Ovary (tissue), 10 donors: ENCODE measurements at regions of chr4 and their contacts with region 1.

Region 1: GRCh38 chr4:73069338-73070073 is at the start of gene COX18:
- DNase-seq: peak; percentile 97 to 99 (median 98)
- H3K4me3 ChIP-seq: peak within 1 kb of the TSS; percentile 59
- H3K27ac ChIP-seq: peak within 1 kb of the TSS; percentile 84 to 94
- H3K4me1 ChIP-seq: peaks cover 2% of the 10 kb centered on the region
- H3K27me3 ChIP-seq: no peaks in the 10 kb centered on the region
- CTCF ChIP-seq: no peak
- EP300 ChIP-seq: no peak
- POLR2A ChIP-seq: peak; percentile 83
- total RNA-seq, gene COX18: 9.9 to 18.2 (median 12.5) TPM

Region 2: DNA sequence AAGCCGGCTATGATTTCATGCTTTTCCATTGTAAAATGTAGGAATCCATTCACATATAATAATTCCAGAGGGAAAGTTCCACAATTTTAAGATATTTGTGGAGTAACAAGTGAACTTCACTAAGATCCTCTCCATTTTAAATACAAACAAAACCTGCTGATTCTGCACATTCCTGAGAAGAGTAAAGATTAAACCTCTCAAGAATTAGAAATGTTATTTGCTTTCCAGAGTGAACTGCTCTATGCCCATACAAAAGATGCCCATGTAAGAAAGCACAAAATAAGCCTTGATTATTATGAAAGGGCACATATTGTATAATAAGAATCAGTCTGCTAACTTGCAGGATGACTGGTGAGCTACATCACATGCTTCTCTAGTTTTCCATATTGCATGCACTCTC is 241.5 kb before region 1 on chr4:
- intact Hi-C with region 1: no loop called
- DNase-seq: no peak
- H3K4me3 ChIP-seq: no peak overlapping the region
- H3K27ac ChIP-seq: no peak overlapping the region
- H3K4me1 ChIP-seq: no peaks in the 10 kb centered on the region
- H3K27me3 ChIP-seq: no peaks in the 10 kb centered on the region
- CTCF ChIP-seq: no peak
- EP300 ChIP-seq: no peak
- POLR2A ChIP-seq: no peak

Region 3: GRCh38 chr4:73258686-73259570 is 189.4 kb after region 1 on chr4 and contains the start of gene ANKRD17:
- intact Hi-C with region 1: loop called in 3 of 4 experiments (anchors 2 to 10 kb)
- DNase-seq: peak; percentile 91 to 96 (median 94)
- H3K4me3 ChIP-seq: peak within 1 kb of the TSS; percentile 66
- H3K27ac ChIP-seq: peak within 1 kb of the TSS; percentile 90 to 94
- H3K4me1 ChIP-seq: peaks cover 3% of the 10 kb centered on the region
- H3K27me3 ChIP-seq: no peaks in the 10 kb centered on the region
- CTCF ChIP-seq: peak in 2 of 3 donors; percentile 56 to 61
- EP300 ChIP-seq: no peak
- POLR2A ChIP-seq: peak; percentile 83
- total RNA-seq, gene ANKRD17: 23.0 to 59.7 (median 49.7) TPM